Caco-2 (cell line): ENCODE measurements at regions of chr6 and their contacts with region 1.

Region 1: DNA sequence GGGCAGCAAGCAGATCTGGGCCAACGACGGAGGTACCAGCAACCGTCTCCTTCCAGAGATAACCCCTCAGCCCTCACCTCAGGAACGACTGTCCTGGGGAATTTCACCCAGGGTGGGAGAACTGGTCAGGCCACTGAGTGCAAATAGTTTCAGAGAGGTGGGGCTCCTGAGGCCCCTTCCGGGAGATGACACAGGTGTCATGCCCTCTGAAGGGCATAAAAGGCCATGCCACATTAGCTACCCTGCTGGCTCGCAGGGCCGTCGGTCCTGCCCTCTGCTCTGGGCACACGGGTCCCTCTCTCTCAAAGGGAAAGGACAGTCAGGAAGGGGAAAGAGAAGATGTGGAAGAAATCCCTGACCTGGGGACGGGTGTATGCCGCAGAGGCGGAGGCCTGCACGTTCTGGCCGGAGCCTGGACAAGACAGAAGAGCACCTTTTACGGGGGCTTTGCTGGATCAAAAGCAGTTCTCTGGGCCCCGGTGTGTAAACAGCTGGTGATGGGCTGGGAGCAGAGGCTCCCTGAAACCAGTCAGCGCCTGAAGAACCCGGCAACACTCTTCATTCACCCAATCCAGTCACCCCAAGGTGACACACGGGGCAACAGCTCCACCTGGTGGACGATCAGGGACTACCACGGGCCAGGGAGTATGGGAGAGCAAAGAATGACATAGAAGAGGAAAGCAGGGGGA is 6.4 kb upstream of the TAF8 start:
- DNase-seq: peak; percentile 88 to 93
- H3K4me3 ChIP-seq: 0 out of 2 replicates have a peak overlapping the region, but pooled peaks have one; percentile 9
- H3K4me3 Mint-ChIP-seq: peak overlapping the region; percentile 76
- H3K27ac Mint-ChIP-seq: peak overlapping the region; percentile 95
- H3K4me1 ChIP-seq: peaks cover 17% of the 10 kb centered on the region
- H3K4me1 Mint-ChIP-seq: peaks cover 9% of the 10 kb centered on the region
- H3K27me3 ChIP-seq: no peaks in the 10 kb centered on the region
- H3K27me3 Mint-ChIP-seq: no peaks in the 10 kb centered on the region
- CTCF ChIP-seq: peak; percentile 90 to 92

Region 2: GRCh38 chr6:41735427-41736356 is 308.2 kb before region 1 on chr6 and contains the start of gene TFEB:
- CTCF ChIA-PET with region 1: no interaction called
- POLR2A ChIA-PET with region 1: no interaction called
- intact Hi-C with region 1: loop called (anchors 2 kb)
- DNase-seq: peak; percentile 92 to 95
- H3K4me3 ChIP-seq: peak within 1 kb of the TSS; percentile 62
- H3K4me3 Mint-ChIP-seq: peak within 1 kb of the TSS; percentile 75
- H3K27ac Mint-ChIP-seq: peak within 1 kb of the TSS; percentile 61
- H3K4me1 ChIP-seq: peaks cover 38% of the 10 kb centered on the region
- H3K4me1 Mint-ChIP-seq: peaks cover 15% of the 10 kb centered on the region
- H3K27me3 ChIP-seq: no peaks in the 10 kb centered on the region
- H3K27me3 Mint-ChIP-seq: no peaks in the 10 kb centered on the region
- CTCF ChIP-seq: peak; percentile 87 to 88
- total RNA-seq, gene TFEB: 3.8 and 3.9 TPM in 2 replicates

Region 3: GRCh38 chr6:41787219-41787917 is 256.6 kb before region 1 on chr6 and contains the start of gene TOMM6:
- CTCF ChIA-PET with region 1: interaction called, 16 read pairs
- POLR2A ChIA-PET with region 1: interaction called, 4 read pairs
- intact Hi-C with region 1: no loop called
- DNase-seq: peak; percentile 93 to 96
- H3K4me3 ChIP-seq: peak within 1 kb of the TSS; percentile 86
- H3K4me3 Mint-ChIP-seq: peak within 1 kb of the TSS; percentile 89
- H3K27ac Mint-ChIP-seq: peak within 1 kb of the TSS; percentile 98
- H3K4me1 ChIP-seq: peaks cover 7% of the 10 kb centered on the region; the same call in 1 of the 2 replicates
- H3K4me1 Mint-ChIP-seq: peaks cover 9% of the 10 kb centered on the region
- H3K27me3 ChIP-seq: no peaks in the 10 kb centered on the region
- H3K27me3 Mint-ChIP-seq: no peaks in the 10 kb centered on the region
- CTCF ChIP-seq: peak; percentile 82 to 89
- total RNA-seq, gene TOMM6: 224 and 260 TPM in 2 replicates

Region 4: DNA sequence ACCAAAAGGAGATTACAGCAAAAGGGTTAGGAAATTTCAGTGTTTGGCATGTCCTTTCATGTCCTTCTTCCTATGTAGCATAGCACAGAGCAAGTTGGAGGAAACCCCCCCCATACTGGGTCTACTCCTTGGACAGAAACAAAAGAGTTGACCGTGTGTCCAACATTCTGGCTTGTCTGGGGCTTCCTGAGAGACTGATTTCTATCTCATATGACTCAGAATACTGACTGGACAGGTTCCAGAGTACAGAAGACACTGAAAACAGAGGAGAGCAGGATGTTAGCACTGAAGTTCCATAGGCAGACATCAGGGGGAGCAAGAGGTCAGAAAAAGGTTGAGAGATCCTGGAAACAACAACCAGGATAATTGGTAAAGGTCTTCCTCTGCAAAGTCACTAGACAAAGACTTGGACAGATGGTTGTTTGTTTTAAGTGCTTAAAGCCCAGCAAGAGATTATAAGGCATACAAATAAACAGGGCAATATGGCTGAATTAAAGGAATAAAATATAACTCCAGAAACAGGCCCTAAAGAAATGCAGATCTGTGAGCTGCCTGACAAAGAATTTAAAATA is 197.2 kb before region 1 on chr6:
- CTCF ChIA-PET with region 1: interaction called, 9 read pairs
- POLR2A ChIA-PET with region 1: no interaction called
- intact Hi-C with region 1: loop called (anchors 1 kb)
- DNase-seq: peak; percentile 65 to 83
- H3K4me3 ChIP-seq: no peak overlapping the region
- H3K4me3 Mint-ChIP-seq: no peak overlapping the region
- H3K27ac Mint-ChIP-seq: no peak overlapping the region
- H3K4me1 ChIP-seq: peaks cover 5% of the 10 kb centered on the region; the same call in 1 of the 2 replicates
- H3K4me1 Mint-ChIP-seq: peaks cover 12% of the 10 kb centered on the region
- H3K27me3 ChIP-seq: no peaks in the 10 kb centered on the region
- H3K27me3 Mint-ChIP-seq: no peaks in the 10 kb centered on the region
- CTCF ChIP-seq: peak; percentile 81 to 86

Region 5: GRCh38 chr6:41941280-41942066 is 102.5 kb before region 1 on chr6 and contains the start of gene CCND3:
- CTCF ChIA-PET with region 1: interaction called, 18 read pairs
- POLR2A ChIA-PET with region 1: interaction called, 3 read pairs
- intact Hi-C with region 1: loop called (anchors 1 kb)
- DNase-seq: peak; percentile 90 to 93
- H3K4me3 ChIP-seq: peak within 1 kb of the TSS; percentile 94
- H3K4me3 Mint-ChIP-seq: peak within 1 kb of the TSS; percentile 80
- H3K27ac Mint-ChIP-seq: peak within 1 kb of the TSS; percentile 86
- H3K4me1 ChIP-seq: peaks cover 17% of the 10 kb centered on the region
- H3K4me1 Mint-ChIP-seq: peaks cover 17% of the 10 kb centered on the region
- H3K27me3 ChIP-seq: no peaks in the 10 kb centered on the region
- H3K27me3 Mint-ChIP-seq: no peaks in the 10 kb centered on the region
- CTCF ChIP-seq: no peak
- total RNA-seq, gene CCND3: 24.7 and 26.9 TPM in 2 replicates

Region 6: GRCh38 chr6:41958022-41958856 is 85.7 kb before region 1 on chr6:
- CTCF ChIA-PET with region 1: no interaction called
- POLR2A ChIA-PET with region 1: no interaction called
- intact Hi-C with region 1: no loop called
- DNase-seq: no peak
- H3K4me3 ChIP-seq: no peak overlapping the region
- H3K4me3 Mint-ChIP-seq: no peak overlapping the region
- H3K27ac Mint-ChIP-seq: no peak overlapping the region
- H3K4me1 ChIP-seq: no peaks in the 10 kb centered on the region
- H3K4me1 Mint-ChIP-seq: peaks cover 6% of the 10 kb centered on the region
- H3K27me3 ChIP-seq: no peaks in the 10 kb centered on the region
- H3K27me3 Mint-ChIP-seq: no peaks in the 10 kb centered on the region
- CTCF ChIP-seq: no peak

Region 7: DNA sequence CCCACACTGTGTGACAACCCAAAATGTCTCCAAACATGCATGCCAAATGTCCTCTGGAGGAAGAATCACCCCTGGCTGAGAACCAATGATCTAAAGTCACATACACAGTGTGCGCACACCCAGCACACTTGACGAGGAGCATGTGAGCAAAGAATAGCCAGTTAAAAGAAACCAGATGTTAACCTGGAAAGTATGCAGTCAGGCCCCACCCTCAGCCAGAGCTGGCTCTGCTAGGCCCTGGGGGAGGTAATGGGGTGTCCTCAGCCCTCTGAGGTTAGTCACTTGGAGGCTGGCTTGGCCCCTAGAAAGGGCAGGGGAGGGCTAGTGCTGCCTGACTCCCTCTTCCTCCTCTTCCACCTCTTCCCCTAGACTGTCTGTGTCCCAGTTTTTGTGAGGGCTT is 114.1 kb after region 1 on chr6:
- CTCF ChIA-PET with region 1: no interaction called
- POLR2A ChIA-PET with region 1: no interaction called
- intact Hi-C with region 1: no loop called
- DNase-seq: no peak
- H3K4me3 ChIP-seq: no peak overlapping the region
- H3K4me3 Mint-ChIP-seq: no peak overlapping the region
- H3K27ac Mint-ChIP-seq: no peak overlapping the region
- H3K4me1 ChIP-seq: 0 out of 2 replicates have a peak, but pooled peaks cover 6% of the 10 kb centered on the region
- H3K4me1 Mint-ChIP-seq: no peaks in the 10 kb centered on the region
- H3K27me3 ChIP-seq: no peaks in the 10 kb centered on the region
- H3K27me3 Mint-ChIP-seq: no peaks in the 10 kb centered on the region
- CTCF ChIP-seq: no peak